Right lobe of liver (tissue), 6 donors: ENCODE measurements at regions of chr3 and their contacts with region 1.

Region 1: GRCh38 chr3:50370594-50370993 is 11.3 kb upstream of the TMEM115 start:
- DNase-seq: no peak
- ATAC-seq: no peak
- H3K4me3 ChIP-seq: no peak overlapping the region
- H3K27ac ChIP-seq: no peak overlapping the region
- H3K4me1 ChIP-seq: no peaks in the 10 kb centered on the region
- H3K27me3 ChIP-seq: no peaks in the 10 kb centered on the region
- CTCF ChIP-seq: no peak
- POLR2A ChIP-seq: no peak

Region 2: GRCh38 chr3:50530001-50530970 is 159.7 kb after region 1 on chr3:
- intact Hi-C with region 1: loop called in 1 of 2 experiments (anchors 10 kb)
- DNase-seq: no peak
- ATAC-seq: no peak
- H3K4me3 ChIP-seq: no peak overlapping the region
- H3K27ac ChIP-seq: no peak overlapping the region
- H3K4me1 ChIP-seq: no peaks in the 10 kb centered on the region
- H3K27me3 ChIP-seq: no peaks in the 10 kb centered on the region
- CTCF ChIP-seq: no peak
- POLR2A ChIP-seq: no peak